ENCODE measurements at regions of chr3 and their contacts with region 1.

Region 1: GRCh38 chr3:172209333-172210321 is 170.2 kb downstream of the FNDC3B start:
- DNase-seq: peak; percentile 61 to 81 (median 78)
- ATAC-seq: peak; percentile 77 to 94 (median 88)
- H3K4me3 ChIP-seq: peak overlapping the region in 2 of 12 donors; percentile 9 to 20
- H3K27ac ChIP-seq: peak overlapping the region in 11 of 12 donors; percentile 12 to 73 (median 53)
- H3K4me1 ChIP-seq: peaks cover 9 to 71% (median 53%) of the 10 kb centered on the region in 12 donors
- H3K27me3 ChIP-seq: no peaks in the 10 kb centered on the region
- CTCF ChIP-seq: no peak
- POLR2A ChIP-seq: no peak

Region 2: GRCh38 chr3:172256101-172256734 is 46.6 kb after region 1 on chr3:
- intact Hi-C with region 1: loop called in 2 of 10 experiments (anchors 5 kb)
- DNase-seq: peak in 3 of 5 donors; percentile 35 to 44 (median 42)
- ATAC-seq: peak; percentile 67 to 84 (median 78)
- H3K4me3 ChIP-seq: no peak overlapping the region
- H3K27ac ChIP-seq: peak overlapping the region; percentile 27 to 84 (median 74)
- H3K4me1 ChIP-seq: peaks cover 7 to 68% (median 52%) of the 10 kb centered on the region in 12 donors
- H3K27me3 ChIP-seq: no peaks in the 10 kb centered on the region
- CTCF ChIP-seq: no peak
- POLR2A ChIP-seq: no peak

Region 3: DNA sequence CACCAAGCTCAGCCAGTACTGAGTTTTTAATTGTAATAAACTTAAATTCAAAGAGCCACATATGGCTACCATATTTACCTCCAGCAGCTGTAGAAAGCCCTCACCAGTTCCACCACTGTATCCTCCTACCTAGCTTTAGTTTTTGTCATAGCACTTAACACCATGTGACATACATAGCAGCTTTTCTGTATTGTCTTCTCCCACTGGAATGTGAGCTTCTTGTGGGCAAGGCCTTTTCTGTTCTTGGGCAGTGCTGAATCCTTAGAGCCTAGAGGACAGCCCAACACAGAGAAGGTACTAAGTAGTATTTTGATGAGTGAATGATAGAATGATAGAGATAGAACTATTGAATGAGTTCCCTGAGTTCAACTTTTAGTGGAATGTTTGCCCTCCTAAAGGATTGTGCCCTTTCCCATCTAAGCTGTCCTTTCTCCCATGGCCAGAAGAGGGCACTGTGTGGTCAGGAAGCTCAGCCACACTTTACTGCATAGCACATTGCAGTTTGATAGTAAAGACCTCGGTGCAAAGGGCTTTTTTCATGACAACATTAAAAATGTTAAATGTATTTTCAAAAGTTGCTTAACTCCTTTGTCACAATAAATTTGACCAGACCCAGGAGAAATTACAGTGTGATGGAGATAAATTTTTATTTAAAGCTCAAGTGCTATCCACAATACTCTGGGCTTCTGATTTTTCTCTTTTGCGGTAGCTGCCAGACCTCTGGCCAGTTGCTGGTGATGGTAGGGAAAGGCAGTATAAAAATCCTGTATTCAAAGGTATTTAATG is 122.8 kb after region 1 on chr3:
- intact Hi-C with region 1: no loop called
- DNase-seq: peak in 4 of 5 donors; percentile 50 to 63 (median 54)
- ATAC-seq: peak; percentile 76 to 89 (median 86)
- H3K4me3 ChIP-seq: no peak overlapping the region
- H3K27ac ChIP-seq: peak overlapping the region in 8 of 12 donors; percentile 3 to 63 (median 34)
- H3K4me1 ChIP-seq: peaks cover 0 to 11% (median 5%) of the 10 kb centered on the region in 12 donors
- H3K27me3 ChIP-seq: no peaks in the 10 kb centered on the region
- CTCF ChIP-seq: peak; percentile 82 to 95 (median 90)
- POLR2A ChIP-seq: no peak

Measured in heart left ventricle (tissue), 16 donors.